ENCODE measurements at regions of chr1 and their contacts with region 1.

Region 1: GRCh38 chr1:8015036-8015808 is 10.9 kb downstream of the ERRFI1 start:
- DNase-seq: peak in 1 of 2 donors; percentile 75
- H3K4me3 ChIP-seq: peak overlapping the region; percentile 11 to 41
- H3K27ac ChIP-seq: peak overlapping the region; percentile 65 to 68
- H3K4me1 ChIP-seq: peaks cover 12 to 35% of the 10 kb centered on the region in 2 donors
- H3K27me3 ChIP-seq: no peaks in the 10 kb centered on the region
- CTCF ChIP-seq: peak; percentile 42 to 58 (median 47)

Region 2: GRCh38 chr1:7975212-7975865 is 39.9 kb before region 1 on chr1:
- intact Hi-C with region 1: loop called (anchors 5 kb)
- DNase-seq: peak in 1 of 2 donors; percentile 78
- H3K4me3 ChIP-seq: no peak overlapping the region
- H3K27ac ChIP-seq: no peak overlapping the region
- H3K4me1 ChIP-seq: peaks cover 0 to 10% of the 10 kb centered on the region in 2 donors
- H3K27me3 ChIP-seq: no peaks in the 10 kb centered on the region
- CTCF ChIP-seq: peak; percentile 85 to 87 (median 85)

Region 3: GRCh38 chr1:8238851-8239305 is 223.7 kb after region 1 on chr1:
- intact Hi-C with region 1: loop called (anchors 5 kb)
- DNase-seq: no peak
- H3K4me3 ChIP-seq: no peak overlapping the region
- H3K27ac ChIP-seq: no peak overlapping the region
- H3K4me1 ChIP-seq: no peaks in the 10 kb centered on the region
- H3K27me3 ChIP-seq: no peaks in the 10 kb centered on the region
- CTCF ChIP-seq: peak in 2 of 3 experiments; percentile 18 to 39

Region 4: GRCh38 chr1:8314346-8315280 is 299.4 kb after region 1 on chr1:
- intact Hi-C with region 1: loop called (anchors 1 kb)
- DNase-seq: peak in 1 of 2 donors; percentile 83
- H3K4me3 ChIP-seq: no peak overlapping the region
- H3K27ac ChIP-seq: no peak overlapping the region
- H3K4me1 ChIP-seq: peaks cover 0 to 14% of the 10 kb centered on the region in 2 donors
- H3K27me3 ChIP-seq: no peaks in the 10 kb centered on the region
- CTCF ChIP-seq: peak; percentile 84 to 92 (median 87)

Region 5: DNA sequence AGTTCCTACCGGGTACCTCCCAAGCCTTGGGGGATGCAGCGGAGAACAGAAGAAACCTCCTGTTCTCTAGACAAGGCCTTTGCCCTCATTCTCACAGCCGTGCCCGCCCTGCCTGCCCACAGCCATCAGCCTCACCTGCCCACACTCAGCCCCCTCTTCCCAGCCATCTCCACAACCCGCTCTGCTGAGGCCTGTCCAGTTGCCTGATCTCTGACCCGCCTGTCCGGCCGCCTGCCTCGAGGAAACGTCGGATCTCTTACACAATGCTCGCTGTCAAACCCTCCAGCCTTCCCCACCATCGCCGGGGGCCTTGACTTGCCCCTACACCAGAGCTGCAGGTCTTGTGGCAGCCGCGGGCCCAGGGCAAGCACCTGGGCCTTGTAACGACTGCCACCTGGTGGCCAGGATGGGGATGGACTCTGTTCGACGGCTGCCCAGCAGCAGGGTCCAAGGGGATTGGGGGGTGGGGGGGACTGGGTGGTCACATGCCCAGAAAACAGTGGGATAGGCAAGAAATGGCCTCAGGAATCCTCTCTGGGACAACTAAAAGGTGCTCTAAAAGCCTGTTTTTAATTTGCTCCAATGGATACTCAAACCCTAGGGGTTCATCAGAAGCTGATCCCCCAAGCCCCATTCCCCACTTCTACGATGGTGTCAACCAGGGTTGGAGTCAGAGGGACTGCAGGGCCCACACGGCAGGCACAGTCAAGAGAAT is 333.7 kb after region 1 on chr1:
- intact Hi-C with region 1: loop called (anchors 2 kb)
- DNase-seq: peak in 1 of 2 donors; percentile 84
- H3K4me3 ChIP-seq: no peak overlapping the region
- H3K27ac ChIP-seq: peak overlapping the region in 1 of 2 donors; percentile 81
- H3K4me1 ChIP-seq: peaks cover under 1 to 28% of the 10 kb centered on the region in 2 donors
- H3K27me3 ChIP-seq: no peaks in the 10 kb centered on the region
- CTCF ChIP-seq: peak; percentile 83 to 95 (median 93)